WTC11 (cell line): ENCODE measurements at regions of chr2 and their contacts with region 1.

Region 1: DNA sequence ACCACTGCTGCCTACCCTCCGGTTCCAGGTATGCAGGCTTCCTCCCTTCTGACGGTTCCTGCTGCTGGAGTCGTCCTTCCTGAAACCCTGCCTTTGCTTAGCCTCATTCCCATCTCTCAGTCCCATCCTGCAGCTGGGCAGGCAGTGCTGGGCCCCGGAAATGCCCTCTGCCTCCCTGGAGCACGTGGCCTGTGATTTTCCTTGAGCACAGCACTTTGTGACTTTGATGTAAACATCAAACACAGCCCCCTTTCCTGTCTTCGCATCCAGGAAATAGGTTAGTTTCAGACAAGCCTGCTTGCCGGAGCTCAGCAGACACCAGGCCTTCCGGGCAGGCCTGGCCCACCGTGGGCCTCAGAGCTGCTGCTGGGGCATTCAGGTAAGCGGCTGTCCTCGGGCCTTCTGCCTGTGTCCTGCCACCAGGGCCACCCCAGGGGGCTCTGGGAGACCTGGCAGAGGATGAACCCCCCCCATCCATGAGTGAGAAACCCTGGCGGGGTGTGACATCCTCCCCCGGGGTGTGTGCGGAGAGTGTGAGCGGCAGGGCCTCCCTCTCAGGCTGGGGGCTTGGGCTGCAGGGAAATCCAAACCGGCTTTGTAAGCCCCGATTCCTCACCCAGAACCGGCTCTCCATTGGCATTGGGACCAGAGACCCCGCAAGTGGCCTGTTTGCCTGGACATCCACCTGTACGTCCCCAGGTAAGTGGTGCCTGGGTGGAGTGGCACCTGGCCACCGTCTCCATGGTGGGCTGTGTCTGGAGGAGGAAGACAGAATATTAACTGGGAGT is at the start of gene ZAP70:
- DNase-seq: no peak
- ATAC-seq: no peak
- H3K4me3 Mint-ChIP-seq: no peak within 1 kb of the TSS
- H3K27ac Mint-ChIP-seq: peak within 1 kb of the TSS; percentile 36; the same call in 1 of the 2 replicates
- H3K4me1 Mint-ChIP-seq: peaks cover 12% of the 10 kb centered on the region
- H3K27me3 Mint-ChIP-seq: peaks cover 4% of the 10 kb centered on the region
- CTCF ChIP-seq: no peak
- total RNA-seq, gene ZAP70: 0.61 to 0.73 TPM (median 0.64 TPM) in 3 replicates

Region 2: GRCh38 chr2:97740590-97741182 is 27.2 kb after region 1 on chr2:
- CTCF ChIA-PET with region 1: interaction called, 30 read pairs
- POLR2A ChIA-PET with region 1: no interaction called
- DNase-seq: peak; percentile 74
- ATAC-seq: peak; percentile 84
- H3K4me3 Mint-ChIP-seq: no peak overlapping the region
- H3K27ac Mint-ChIP-seq: no peak overlapping the region
- H3K4me1 Mint-ChIP-seq: peaks cover 15% of the 10 kb centered on the region
- H3K27me3 Mint-ChIP-seq: no peaks in the 10 kb centered on the region
- CTCF ChIP-seq: peak; percentile 86

Region 3: GRCh38 chr2:97751752-97752151 is 38.3 kb after region 1 on chr2:
- CTCF ChIA-PET with region 1: interaction called, 34 read pairs
- POLR2A ChIA-PET with region 1: no interaction called
- DNase-seq: no peak
- ATAC-seq: peak; percentile 37
- H3K4me3 Mint-ChIP-seq: no peak overlapping the region
- H3K27ac Mint-ChIP-seq: peak overlapping the region; percentile 67; the same call in 1 of the 2 replicates
- H3K4me1 Mint-ChIP-seq: peaks cover 34% of the 10 kb centered on the region
- H3K27me3 Mint-ChIP-seq: no peaks in the 10 kb centered on the region
- CTCF ChIP-seq: no peak

Region 4: DNA sequence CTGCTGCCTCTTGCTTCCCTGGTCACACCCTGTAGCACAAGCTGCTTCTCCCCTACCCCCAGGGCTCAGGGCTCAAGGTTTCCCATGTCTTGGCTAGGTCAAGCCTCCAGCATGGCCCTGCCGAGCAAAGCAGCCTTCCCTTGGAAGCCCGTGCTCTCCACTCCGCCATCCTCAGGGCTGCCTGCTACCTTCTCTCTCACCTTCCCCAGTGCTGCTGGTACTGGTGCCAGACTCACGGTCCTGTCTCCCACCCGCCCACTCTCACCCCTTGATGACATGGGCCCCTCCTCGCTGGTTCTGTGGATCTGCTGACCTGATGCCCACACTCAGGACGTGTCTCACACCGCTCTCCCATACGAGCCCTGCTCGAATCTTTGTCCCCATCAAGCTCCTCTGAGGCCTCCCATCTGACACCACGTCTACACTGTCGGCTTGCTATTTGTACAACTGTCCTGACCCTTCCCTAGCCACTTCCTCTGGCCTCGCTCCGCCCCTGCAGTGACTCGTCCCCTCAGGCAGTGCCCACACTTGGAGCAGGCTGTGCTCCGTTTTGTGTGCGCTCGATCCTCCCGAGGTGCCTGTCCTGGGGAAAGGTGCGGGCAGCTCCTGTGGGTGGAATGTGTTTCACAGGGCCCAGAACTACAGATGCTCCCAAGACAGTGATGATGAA is 49.8 kb after region 1 on chr2:
- CTCF ChIA-PET with region 1: interaction called, 10 read pairs
- POLR2A ChIA-PET with region 1: no interaction called
- DNase-seq: no peak
- ATAC-seq: no peak
- H3K4me3 Mint-ChIP-seq: no peak overlapping the region
- H3K27ac Mint-ChIP-seq: no peak overlapping the region
- H3K4me1 Mint-ChIP-seq: peaks cover 21% of the 10 kb centered on the region
- H3K27me3 Mint-ChIP-seq: peaks cover 8% of the 10 kb centered on the region
- CTCF ChIP-seq: no peak

Region 5: GRCh38 chr2:97870396-97870843 is 156.9 kb after region 1 on chr2:
- CTCF ChIA-PET with region 1: no interaction called
- POLR2A ChIA-PET with region 1: no interaction called
- DNase-seq: no peak
- ATAC-seq: no peak
- H3K4me3 Mint-ChIP-seq: no peak overlapping the region
- H3K27ac Mint-ChIP-seq: no peak overlapping the region; the same call in 1 of the 2 replicates
- H3K4me1 Mint-ChIP-seq: peaks cover 19% of the 10 kb centered on the region
- H3K27me3 Mint-ChIP-seq: peaks cover 3% of the 10 kb centered on the region; the same call in 1 of the 2 replicates
- CTCF ChIP-seq: no peak